ENCODE measurements at regions of chr18 and their contacts with region 1.

Region 1: GRCh38 chr18:2121221-2121620 is 450.1 kb downstream of the METTL4 start:
- DNase-seq: no peak
- H3K4me3 ChIP-seq: no peak overlapping the region
- H3K4me3 Mint-ChIP-seq: no peak overlapping the region
- H3K27ac Mint-ChIP-seq: no peak overlapping the region
- H3K4me1 ChIP-seq: no peaks in the 10 kb centered on the region
- H3K4me1 Mint-ChIP-seq: no peaks in the 10 kb centered on the region
- H3K27me3 ChIP-seq: no peaks in the 10 kb centered on the region
- H3K27me3 Mint-ChIP-seq: no peaks in the 10 kb centered on the region
- CTCF ChIP-seq: peak in 1 of 2 experiments; percentile 10

Region 2: GRCh38 chr18:1751243-1751642 is 370.0 kb before region 1 on chr18:
- CTCF ChIA-PET with region 1: no interaction called
- POLR2A ChIA-PET with region 1: no interaction called
- intact Hi-C with region 1: loop called (anchors 1 kb)
- DNase-seq: no peak
- H3K4me3 ChIP-seq: no peak overlapping the region
- H3K4me3 Mint-ChIP-seq: no peak overlapping the region
- H3K27ac Mint-ChIP-seq: no peak overlapping the region
- H3K4me1 ChIP-seq: no peaks in the 10 kb centered on the region
- H3K4me1 Mint-ChIP-seq: no peaks in the 10 kb centered on the region
- H3K27me3 ChIP-seq: no peaks in the 10 kb centered on the region
- H3K27me3 Mint-ChIP-seq: peaks cover 5% of the 10 kb centered on the region
- CTCF ChIP-seq: peak in 1 of 2 experiments; percentile 10

Region 3: DNA sequence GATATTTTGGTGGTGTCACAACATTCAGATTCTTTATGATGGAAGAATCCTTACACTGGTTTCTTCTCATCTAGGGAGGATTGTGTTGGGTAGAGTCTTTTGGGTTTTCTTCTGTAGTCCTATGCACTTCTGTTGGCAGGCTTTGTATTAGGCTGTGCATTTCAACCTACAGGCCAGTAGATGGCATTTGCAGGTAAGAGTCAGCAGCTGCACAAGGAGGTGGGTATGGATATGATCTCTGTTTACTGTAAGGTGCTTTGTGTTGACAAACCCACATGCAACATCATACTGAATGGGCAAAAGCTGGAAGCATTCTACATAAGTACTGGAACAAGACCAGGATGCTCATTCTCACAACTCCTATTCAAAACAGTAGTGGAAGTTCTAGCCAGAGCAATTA is 206.7 kb before region 1 on chr18:
- CTCF ChIA-PET with region 1: no interaction called
- POLR2A ChIA-PET with region 1: no interaction called
- intact Hi-C with region 1: loop called (anchors 1 kb)
- DNase-seq: peak; percentile 32 to 41
- H3K4me3 ChIP-seq: no peak overlapping the region
- H3K4me3 Mint-ChIP-seq: no peak overlapping the region
- H3K27ac Mint-ChIP-seq: no peak overlapping the region
- H3K4me1 ChIP-seq: no peaks in the 10 kb centered on the region
- H3K4me1 Mint-ChIP-seq: no peaks in the 10 kb centered on the region
- H3K27me3 ChIP-seq: no peaks in the 10 kb centered on the region
- H3K27me3 Mint-ChIP-seq: no peaks in the 10 kb centered on the region
- CTCF ChIP-seq: peak; percentile 41 to 63

Region 4: DNA sequence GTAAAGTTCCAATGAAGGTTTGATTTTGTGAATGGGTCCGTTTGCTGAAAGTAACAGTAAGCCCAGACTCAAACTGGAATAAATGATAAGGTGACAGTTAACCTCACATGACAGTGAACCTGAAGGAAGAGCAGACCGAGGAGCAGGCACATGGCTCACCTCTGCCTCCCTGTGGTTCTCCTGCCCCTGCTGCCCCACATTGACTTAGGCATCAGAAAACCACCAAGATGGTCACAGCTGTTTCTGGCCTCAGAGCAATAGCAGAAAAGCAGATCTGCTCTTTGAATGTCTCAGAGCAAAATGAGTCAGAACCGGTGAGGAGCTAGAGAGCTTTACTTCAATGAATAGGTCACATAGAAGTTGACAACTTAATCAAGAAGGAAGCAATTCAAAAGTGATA is 37.5 kb before region 1 on chr18:
- CTCF ChIA-PET with region 1: no interaction called
- POLR2A ChIA-PET with region 1: no interaction called
- intact Hi-C with region 1: no loop called
- DNase-seq: peak in 1 of 2 experiments; percentile 39
- H3K4me3 ChIP-seq: no peak overlapping the region
- H3K4me3 Mint-ChIP-seq: no peak overlapping the region
- H3K27ac Mint-ChIP-seq: no peak overlapping the region
- H3K4me1 ChIP-seq: no peaks in the 10 kb centered on the region; the same call in 1 of the 2 replicates
- H3K4me1 Mint-ChIP-seq: peaks cover 7% of the 10 kb centered on the region
- H3K27me3 ChIP-seq: no peaks in the 10 kb centered on the region
- H3K27me3 Mint-ChIP-seq: no peaks in the 10 kb centered on the region
- CTCF ChIP-seq: peak; percentile 64 to 69